Activated CD8-positive, alpha-beta T cell treated with anti-CD3 and anti-CD28 coated beads, Interleukin-2, amount 10 ng/mL, durations not matched to agents 7 days and 5 days (primary cell): ENCODE measurements at regions of chr1 and their contacts with region 1.

Region 1: DNA sequence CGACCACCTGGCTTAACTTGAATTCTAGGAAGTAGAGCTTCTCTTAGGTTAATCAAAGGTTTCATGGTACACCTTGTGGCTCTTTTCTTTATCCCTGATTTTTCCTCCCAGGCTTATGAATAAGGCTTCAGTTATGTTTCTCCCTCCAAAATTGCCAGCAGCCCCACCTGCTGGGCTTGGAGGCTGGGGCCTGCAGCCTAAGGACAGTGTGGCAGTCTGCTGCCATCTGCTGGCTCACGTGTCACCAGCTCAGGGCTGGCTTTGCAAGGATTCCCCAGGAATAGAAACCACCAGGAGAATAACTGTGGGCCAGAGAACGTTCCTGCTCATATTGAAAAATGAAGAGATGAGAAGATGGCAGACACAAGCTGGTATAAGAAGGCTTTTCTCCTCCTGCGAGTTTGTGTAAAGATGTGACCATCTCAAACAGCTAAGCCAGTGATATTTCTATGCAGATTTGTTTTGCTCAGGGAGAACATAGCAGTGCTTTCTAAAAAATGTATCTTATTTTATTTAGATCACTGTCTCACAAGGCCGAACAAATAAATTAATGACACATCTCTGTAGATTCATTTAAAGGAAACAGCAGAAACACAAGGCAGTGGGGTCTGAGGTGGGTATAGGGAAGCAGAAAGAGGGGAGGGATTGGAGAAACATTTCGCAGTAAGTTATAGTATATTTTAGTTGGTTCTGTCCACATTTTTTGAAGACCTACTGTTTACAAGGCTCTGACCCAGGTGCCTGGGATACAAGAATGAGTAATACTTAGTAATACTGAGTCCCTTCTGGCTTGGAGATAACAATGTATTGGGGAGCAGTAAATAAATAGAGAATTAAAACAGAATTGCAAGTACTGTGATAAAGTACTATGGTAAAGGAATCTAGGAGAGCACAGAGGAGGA is 291.1 kb upstream of the SGIP1 start:
- DNase-seq: peak; percentile 83
- ATAC-seq: peak; percentile 95
- H3K4me3 Mint-ChIP-seq: no peak overlapping the region
- H3K27ac Mint-ChIP-seq: no peak overlapping the region
- H3K4me1 Mint-ChIP-seq: peaks cover 27% of the 10 kb centered on the region
- H3K27me3 Mint-ChIP-seq: peaks cover 6% of the 10 kb centered on the region

Region 2: DNA sequence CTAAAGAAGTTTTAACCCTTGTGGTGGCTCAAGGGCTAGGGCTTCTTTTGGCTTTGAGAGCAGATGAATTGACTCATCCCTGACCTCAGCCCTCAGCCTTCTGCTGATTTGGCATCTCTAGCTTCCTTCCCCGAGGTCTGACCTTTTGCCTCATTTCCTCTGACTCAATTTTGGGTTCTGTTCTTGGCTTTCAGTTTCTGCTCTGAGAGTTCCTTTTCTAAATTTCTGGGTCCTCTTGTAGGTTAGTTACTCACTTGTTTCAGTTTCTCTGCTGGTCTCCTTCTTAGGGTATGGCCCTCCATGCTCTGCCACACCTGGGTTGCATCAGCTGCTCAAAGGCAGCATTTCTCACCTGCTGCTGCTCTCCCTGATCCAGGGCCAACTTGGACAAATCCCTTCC is 430.8 kb before region 1 on chr1:
- CTCF ChIA-PET with region 1: interaction called, 10 read pairs
- POLR2A ChIA-PET with region 1: no interaction called
- DNase-seq: peak; percentile 87
- ATAC-seq: peak; percentile 98
- H3K4me3 Mint-ChIP-seq: peak overlapping the region; percentile 19
- H3K27ac Mint-ChIP-seq: peak overlapping the region; percentile 88
- H3K4me1 Mint-ChIP-seq: peaks cover 26% of the 10 kb centered on the region
- H3K27me3 Mint-ChIP-seq: peaks cover 24% of the 10 kb centered on the region

Region 3: DNA sequence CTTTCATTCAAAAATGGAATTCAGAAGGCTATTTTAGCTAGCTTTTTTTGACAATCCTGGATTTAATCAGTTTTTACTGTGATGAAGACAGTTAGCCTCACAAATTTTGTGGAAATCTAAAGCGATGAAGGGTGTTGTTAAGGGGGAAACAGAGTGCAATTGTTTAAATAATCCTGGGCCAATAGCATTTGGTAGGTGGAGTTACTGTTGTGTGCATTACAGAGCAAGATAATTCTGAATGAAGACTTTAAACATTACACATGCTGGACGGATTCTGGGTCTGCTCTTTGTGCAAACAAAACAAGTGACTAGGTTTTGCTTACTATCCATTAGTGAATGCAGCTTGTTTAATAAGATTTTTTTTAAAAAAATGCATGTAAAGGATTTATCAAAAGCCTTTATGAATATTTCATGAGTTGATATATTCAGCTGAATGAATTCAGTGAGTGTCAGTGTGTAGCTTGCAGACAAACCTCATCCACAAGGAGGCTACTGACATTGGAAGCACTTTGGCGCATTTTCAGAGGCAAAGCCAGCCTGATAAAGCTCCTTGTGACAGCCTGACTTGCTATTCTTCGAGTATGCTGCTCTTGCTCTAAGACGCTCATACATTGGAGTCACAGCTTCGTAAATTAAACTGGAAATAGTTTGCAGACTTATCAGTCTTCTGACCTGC is 250.6 kb before region 1 on chr1:
- CTCF ChIA-PET with region 1: interaction called, 20 read pairs
- POLR2A ChIA-PET with region 1: no interaction called
- DNase-seq: no peak
- ATAC-seq: no peak
- H3K4me3 Mint-ChIP-seq: no peak overlapping the region
- H3K27ac Mint-ChIP-seq: no peak overlapping the region
- H3K4me1 Mint-ChIP-seq: no peaks in the 10 kb centered on the region
- H3K27me3 Mint-ChIP-seq: peaks cover 2% of the 10 kb centered on the region

Region 4: GRCh38 chr1:66182551-66183178 is 60.2 kb before region 1 on chr1:
- CTCF ChIA-PET with region 1: interaction called, 71 read pairs
- POLR2A ChIA-PET with region 1: no interaction called
- DNase-seq: peak; percentile 44
- ATAC-seq: peak; percentile 75
- H3K4me3 Mint-ChIP-seq: no peak overlapping the region
- H3K27ac Mint-ChIP-seq: peak overlapping the region; percentile 28
- H3K4me1 Mint-ChIP-seq: peaks cover 25% of the 10 kb centered on the region
- H3K27me3 Mint-ChIP-seq: no peaks in the 10 kb centered on the region

Region 5: DNA sequence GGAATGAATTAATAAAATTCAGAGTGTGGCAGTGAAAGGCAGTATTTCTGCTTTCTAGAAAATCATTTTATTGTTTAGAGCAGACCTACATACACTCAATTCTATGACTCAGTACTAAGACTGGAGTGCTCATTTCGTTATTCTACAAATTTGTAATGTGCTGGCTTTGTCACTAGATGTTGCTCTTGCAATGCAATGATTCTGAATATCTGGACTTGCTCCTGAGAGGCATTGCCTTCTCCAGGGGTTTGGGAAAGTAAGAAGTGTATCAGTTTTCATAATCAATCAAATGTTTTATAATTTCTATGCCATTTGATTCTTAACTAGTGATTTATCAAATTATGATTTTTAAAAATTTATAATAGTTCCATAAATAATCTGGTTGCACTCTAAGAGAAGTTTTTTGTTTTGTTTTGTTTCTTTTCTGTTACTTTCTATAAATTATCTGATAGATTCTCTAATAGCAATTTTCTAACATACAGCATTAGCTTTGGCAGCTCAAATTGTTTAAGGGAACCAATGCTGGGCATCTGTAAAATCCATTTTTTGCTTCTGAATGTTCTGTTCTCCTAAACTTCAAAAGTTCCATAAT is 10.5 kb after region 1 on chr1:
- CTCF ChIA-PET with region 1: interaction called, 49 read pairs
- POLR2A ChIA-PET with region 1: no interaction called
- DNase-seq: peak; percentile 46
- ATAC-seq: peak; percentile 83
- H3K4me3 Mint-ChIP-seq: no peak overlapping the region
- H3K27ac Mint-ChIP-seq: no peak overlapping the region
- H3K4me1 Mint-ChIP-seq: peaks cover 37% of the 10 kb centered on the region
- H3K27me3 Mint-ChIP-seq: no peaks in the 10 kb centered on the region

Region 6: DNA sequence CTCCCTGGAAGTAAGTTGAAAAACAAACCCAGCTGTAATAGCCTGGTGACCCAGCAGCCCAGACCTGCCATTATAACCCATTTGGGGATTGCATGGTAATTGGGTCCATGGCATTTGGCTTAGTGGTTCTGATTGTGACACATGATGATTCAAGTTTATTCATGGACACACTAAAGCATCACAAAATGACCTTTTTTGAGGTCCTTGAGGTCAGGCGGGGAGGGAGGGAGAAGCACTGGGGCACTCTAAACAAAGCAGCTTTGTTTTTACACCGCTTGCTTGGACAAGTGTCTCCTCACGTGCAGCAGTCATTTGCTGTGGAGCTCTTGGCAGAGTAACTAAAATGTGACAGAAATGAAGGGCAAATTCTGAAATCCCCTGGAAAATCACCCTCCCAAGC is 50.0 kb after region 1 on chr1:
- CTCF ChIA-PET with region 1: no interaction called
- POLR2A ChIA-PET with region 1: no interaction called
- DNase-seq: no peak
- ATAC-seq: no peak
- H3K4me3 Mint-ChIP-seq: no peak overlapping the region
- H3K27ac Mint-ChIP-seq: no peak overlapping the region
- H3K4me1 Mint-ChIP-seq: peaks cover 30% of the 10 kb centered on the region
- H3K27me3 Mint-ChIP-seq: no peaks in the 10 kb centered on the region

Region 7: DNA sequence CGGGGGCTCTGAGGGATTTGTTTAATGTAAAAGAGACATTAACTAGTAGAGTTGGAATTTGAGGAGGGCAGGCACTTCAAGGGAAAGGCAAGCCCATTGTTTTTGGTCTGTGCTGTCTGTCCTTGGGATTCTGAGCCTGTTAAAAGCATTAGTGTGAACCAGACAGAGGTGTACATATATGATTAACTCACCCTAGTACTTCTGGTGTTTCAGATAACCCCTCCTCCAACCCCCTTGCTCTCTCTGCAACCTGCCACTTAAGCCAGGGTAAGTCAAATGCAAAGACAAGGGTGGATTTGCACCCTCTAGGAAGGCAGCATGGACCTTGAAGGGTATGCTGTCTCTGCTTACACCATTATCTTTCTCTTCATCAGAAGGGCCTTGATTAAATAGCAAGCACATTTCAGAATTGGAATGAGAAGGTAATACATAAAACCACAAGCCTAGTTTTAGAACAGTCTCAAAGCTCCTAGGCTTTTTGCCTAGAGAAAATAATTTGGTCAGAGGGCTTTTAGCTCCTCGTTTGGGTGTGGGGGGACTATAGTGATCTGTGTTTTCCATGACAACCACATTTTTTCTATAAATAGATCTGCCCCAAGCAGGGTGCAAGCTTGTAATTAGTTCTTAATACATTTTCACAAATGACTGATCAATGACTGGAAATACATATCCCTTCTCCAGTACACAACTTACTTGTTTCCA is 170.4 kb after region 1 on chr1:
- CTCF ChIA-PET with region 1: no interaction called
- POLR2A ChIA-PET with region 1: no interaction called
- DNase-seq: no peak
- ATAC-seq: no peak
- H3K4me3 Mint-ChIP-seq: no peak overlapping the region
- H3K27ac Mint-ChIP-seq: no peak overlapping the region
- H3K4me1 Mint-ChIP-seq: peaks cover 35% of the 10 kb centered on the region
- H3K27me3 Mint-ChIP-seq: no peaks in the 10 kb centered on the region

Region 8: DNA sequence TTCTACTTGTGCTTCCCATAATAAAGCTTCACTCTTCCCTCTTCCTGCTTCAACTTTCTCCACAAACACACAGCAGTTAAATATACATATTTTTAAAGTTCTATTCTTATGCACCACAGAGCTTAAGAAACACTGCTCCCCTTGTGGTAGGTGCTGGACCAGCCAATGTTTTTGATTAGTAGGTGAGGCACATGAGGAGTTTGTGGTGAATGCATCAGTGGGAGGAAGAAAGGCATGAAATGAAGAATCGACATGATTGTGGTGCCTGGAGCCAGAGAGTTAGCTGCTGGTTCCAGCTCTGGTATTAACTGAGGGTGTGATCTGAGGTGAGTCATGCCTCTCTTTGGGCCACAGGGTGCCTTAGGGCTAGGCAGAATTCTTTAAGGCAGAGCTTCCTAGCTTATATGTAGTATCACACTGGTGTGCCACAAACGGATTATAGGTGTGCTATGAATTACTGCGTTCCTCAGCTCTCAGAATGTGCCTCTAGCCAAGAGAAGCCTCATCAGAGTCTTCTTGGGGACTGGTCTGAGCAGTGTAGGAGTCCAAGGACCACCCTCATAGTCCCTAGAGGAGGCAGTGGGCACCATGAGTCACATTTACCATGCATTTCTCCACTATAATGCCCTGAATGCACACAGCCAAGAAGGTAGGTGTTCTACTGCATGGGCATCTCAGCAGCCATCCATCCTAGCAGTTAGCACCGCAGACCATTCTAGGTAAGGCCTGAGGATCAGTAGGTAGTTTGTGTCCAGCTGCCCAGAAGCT is 193.7 kb after region 1 on chr1:
- CTCF ChIA-PET with region 1: interaction called, 703 read pairs
- POLR2A ChIA-PET with region 1: no interaction called
- DNase-seq: peak; percentile 64
- ATAC-seq: peak; percentile 86
- H3K4me3 Mint-ChIP-seq: no peak overlapping the region
- H3K27ac Mint-ChIP-seq: no peak overlapping the region
- H3K4me1 Mint-ChIP-seq: peaks cover 36% of the 10 kb centered on the region
- H3K27me3 Mint-ChIP-seq: no peaks in the 10 kb centered on the region